Ascending aorta (tissue), 2 donors: ENCODE measurements at regions of chr13 and their contacts with region 1.

Region 1: GRCh38 chr13:22757530-22758120 is 423.2 kb upstream of the SGCG start:
- DNase-seq: no peak
- H3K4me3 ChIP-seq: no peak overlapping the region
- H3K27ac ChIP-seq: no peak overlapping the region
- H3K4me1 ChIP-seq: no peaks in the 10 kb centered on the region
- H3K27me3 ChIP-seq: no peaks in the 10 kb centered on the region
- CTCF ChIP-seq: peak in 2 of 3 experiments; percentile 28 to 48

Region 2: GRCh38 chr13:21638319-21639282 is 1119.0 kb before region 1 on chr13:
- intact Hi-C with region 1: loop called (anchors 1 kb)
- DNase-seq: no peak
- H3K4me3 ChIP-seq: no peak overlapping the region
- H3K27ac ChIP-seq: no peak overlapping the region
- H3K4me1 ChIP-seq: no peaks in the 10 kb centered on the region
- H3K27me3 ChIP-seq: no peaks in the 10 kb centered on the region
- CTCF ChIP-seq: peak; percentile 58 to 76 (median 70)

Region 3: DNA sequence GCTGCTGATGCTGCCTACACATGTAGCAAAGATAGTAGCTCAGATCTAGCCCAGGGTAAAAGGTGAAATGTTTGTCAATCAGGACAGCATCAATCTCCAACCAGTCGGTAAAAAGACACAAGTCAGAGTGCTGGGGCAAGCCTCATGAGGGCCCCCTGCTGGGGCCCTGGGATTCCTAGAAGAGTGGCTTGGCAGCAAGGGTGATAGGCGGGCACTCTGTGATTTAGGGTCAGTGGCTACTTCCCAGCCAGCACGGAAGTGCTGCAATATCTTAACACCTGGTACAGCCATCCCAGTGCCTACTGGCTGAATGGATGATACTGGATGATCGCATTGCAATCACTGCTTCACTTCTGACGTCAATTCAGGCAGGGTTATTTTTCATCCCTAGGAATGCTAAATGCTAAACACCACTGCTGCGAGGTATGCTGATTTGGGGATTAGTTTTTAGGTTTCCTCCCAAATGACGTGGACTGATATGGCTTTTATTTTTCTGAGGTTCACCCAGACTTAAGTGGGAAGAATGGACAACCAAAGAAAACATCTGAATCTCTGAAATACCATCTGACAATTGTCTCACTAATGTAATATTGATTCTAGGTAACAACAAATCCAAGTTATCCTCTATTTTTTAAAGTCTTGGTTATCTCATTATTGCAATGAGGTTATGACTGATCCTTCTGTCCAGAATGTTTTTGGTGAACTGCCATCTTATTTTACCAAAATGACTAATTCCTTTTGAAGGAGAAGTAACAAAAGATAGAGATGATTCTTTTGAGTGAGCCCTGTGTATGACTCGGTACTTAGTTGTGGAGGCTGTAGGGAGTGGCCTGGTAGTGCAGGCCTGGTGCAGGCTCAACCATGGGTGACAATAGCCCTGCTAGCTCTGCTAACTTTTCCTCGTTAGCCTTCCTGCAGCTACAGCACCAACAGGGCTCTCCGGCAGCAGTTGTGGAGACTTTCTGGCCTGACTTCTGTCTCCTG is 654.3 kb before region 1 on chr13:
- intact Hi-C with region 1: loop called (anchors 5 kb)
- DNase-seq: no peak
- H3K4me3 ChIP-seq: no peak overlapping the region
- H3K27ac ChIP-seq: no peak overlapping the region
- H3K4me1 ChIP-seq: peaks cover 7 to 13% of the 10 kb centered on the region in 2 donors
- H3K27me3 ChIP-seq: no peaks in the 10 kb centered on the region
- CTCF ChIP-seq: no peak

Region 4: DNA sequence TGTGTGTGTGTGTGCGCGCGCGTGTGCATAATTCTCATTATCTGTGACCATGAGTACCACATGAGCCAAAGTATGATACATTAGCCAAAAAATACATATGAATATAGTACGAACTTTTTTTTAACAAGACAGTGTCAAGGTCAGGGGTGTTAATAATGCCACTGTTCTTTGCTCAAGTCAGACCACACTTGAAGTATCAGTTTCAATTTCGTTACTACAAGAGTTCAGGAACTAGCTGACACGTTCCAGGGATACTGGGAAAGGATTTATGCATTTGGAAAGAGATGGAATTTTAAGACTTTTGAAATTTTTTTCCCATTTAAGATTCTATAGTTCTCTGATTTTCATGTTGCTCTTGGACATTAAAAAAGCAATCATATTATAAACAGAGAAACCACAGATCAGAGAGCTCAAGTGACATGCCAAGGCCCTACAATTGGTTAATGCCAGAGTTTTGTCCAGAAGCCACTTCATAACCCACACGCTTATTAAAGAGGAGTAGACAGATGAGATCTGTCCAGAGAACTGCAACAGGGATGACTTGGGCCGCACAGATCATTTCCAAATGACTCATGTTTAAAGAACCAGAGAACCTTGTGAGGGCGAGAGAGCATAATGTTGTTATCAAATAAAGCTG is 295.7 kb before region 1 on chr13:
- intact Hi-C with region 1: no loop called
- DNase-seq: no peak
- H3K4me3 ChIP-seq: no peak overlapping the region
- H3K27ac ChIP-seq: no peak overlapping the region
- H3K4me1 ChIP-seq: no peaks in the 10 kb centered on the region
- H3K27me3 ChIP-seq: no peaks in the 10 kb centered on the region
- CTCF ChIP-seq: no peak